Ovary (tissue), 10 donors: ENCODE measurements at regions of chr22 and their contacts with region 1.

Region 1: DNA sequence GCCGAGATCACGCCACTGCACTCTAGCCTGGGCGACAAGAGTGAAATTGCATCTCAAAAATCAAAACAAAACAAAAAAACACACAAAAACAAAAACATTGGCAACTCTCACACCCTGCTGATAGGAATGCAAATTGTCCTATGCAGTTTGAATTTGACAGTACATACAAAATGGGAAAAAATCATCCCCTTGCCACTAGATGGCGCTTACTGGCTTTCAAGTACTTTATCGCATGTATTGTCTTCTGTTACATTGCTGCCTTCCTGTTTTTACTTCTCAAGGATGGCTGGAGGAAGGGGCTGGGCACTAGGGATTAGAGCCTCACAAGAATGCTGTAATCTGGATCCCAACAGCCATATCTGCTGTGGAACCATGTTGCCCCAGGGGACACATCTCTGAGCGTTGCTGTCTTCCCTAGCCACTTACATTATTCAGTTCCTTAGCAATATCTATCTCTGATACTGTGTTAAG is 59.4 kb upstream of the A4GALT start:
- DNase-seq: peak in 1 of 5 donors; percentile 65
- H3K4me3 ChIP-seq: no peak overlapping the region
- H3K27ac ChIP-seq: no peak overlapping the region
- H3K4me1 ChIP-seq: no peaks in the 10 kb centered on the region
- H3K27me3 ChIP-seq: no peaks in the 10 kb centered on the region
- CTCF ChIP-seq: peak; percentile 74 to 90 (median 78)
- EP300 ChIP-seq: no peak
- POLR2A ChIP-seq: no peak

Region 2: GRCh38 chr22:42236268-42236667 is 543.8 kb before region 1 on chr22:
- intact Hi-C with region 1: no loop called
- DNase-seq: no peak
- H3K4me3 ChIP-seq: no peak overlapping the region
- H3K27ac ChIP-seq: no peak overlapping the region
- H3K4me1 ChIP-seq: peaks cover 2% of the 10 kb centered on the region
- H3K27me3 ChIP-seq: no peaks in the 10 kb centered on the region
- CTCF ChIP-seq: no peak
- EP300 ChIP-seq: no peak
- POLR2A ChIP-seq: no peak

Region 3: DNA sequence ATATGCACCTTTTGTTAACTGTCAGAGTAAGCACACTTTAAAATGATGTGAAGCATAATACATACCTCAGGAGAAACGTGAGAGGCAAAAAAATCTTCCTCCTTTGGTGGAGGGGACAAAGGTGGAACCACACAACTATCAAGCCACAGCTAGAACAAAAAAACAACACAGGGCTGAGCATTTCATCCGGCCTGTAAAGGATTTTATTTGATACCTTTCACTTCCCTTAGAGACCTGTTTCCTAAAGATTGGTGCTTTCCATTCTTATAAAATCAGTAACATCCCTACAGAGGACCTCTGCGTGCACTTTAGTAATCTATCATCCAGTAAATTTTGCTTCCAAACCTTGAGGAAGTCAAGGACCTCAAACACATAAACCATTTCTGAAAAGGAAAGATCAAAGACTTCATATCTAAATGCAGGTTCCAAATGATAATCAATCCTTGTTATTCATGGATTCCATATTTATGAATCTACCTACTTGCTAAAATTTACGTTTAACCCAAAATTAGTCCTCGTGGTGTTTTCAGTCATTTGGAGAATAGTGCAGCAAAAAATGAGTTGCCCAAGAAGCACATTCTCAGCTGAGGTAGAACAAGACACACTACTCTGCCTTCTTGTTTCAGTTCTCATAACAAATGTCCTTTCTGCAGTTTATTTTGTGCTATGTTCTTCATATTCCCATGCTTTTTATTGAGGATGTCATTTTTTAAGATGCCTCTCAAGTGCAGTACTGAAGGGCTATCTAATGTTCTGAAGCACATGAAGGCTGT is 54.3 kb after region 1 on chr22:
- intact Hi-C with region 1: no loop called
- DNase-seq: no peak
- H3K4me3 ChIP-seq: no peak overlapping the region
- H3K27ac ChIP-seq: no peak overlapping the region
- H3K4me1 ChIP-seq: no peaks in the 10 kb centered on the region
- H3K27me3 ChIP-seq: no peaks in the 10 kb centered on the region
- CTCF ChIP-seq: no peak
- EP300 ChIP-seq: no peak
- POLR2A ChIP-seq: no peak

Region 4: DNA sequence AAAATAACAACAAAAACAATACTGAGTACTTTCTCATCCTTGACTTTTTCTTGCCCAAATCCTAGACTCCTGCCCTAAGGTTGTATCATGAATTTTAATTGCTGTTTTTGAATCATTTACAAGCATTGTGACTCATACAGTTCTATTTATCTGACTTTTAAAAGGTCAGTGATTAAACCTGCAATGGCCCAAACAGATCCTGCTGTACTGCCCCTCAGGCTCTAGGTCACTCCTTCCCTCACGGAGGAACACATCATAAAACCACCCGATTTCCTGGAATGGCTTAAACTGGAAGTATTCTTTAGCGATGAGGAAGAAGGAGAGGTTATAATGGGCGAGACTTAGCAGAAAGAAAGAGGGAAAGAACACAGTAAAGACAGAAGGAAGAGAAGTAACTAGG is 64.7 kb after region 1 on chr22:
- intact Hi-C with region 1: no loop called
- DNase-seq: no peak
- H3K4me3 ChIP-seq: no peak overlapping the region
- H3K27ac ChIP-seq: no peak overlapping the region
- H3K4me1 ChIP-seq: no peaks in the 10 kb centered on the region
- H3K27me3 ChIP-seq: no peaks in the 10 kb centered on the region
- CTCF ChIP-seq: no peak
- EP300 ChIP-seq: no peak
- POLR2A ChIP-seq: no peak

Region 5: DNA sequence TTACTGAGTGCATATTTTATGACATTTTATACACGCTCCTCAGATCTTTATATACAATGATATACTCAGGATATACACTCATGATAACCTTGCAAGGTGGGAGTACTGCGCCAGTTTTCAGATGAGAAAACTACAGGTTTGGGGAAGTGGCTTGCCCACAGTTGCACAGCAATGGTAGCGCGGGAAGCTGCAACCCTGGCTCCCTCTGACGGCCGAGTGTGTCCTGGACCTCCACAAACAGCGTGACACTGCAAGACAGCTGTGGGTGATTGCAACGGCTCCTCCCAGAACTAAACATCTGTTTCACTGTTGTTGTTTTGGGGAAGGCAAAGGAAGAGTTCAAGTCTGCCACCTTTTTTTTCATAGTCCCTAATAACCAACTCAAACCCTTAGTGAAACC is 187.8 kb after region 1 on chr22:
- intact Hi-C with region 1: no loop called
- DNase-seq: no peak
- H3K4me3 ChIP-seq: no peak overlapping the region
- H3K27ac ChIP-seq: no peak overlapping the region
- H3K4me1 ChIP-seq: peaks cover 5% of the 10 kb centered on the region
- H3K27me3 ChIP-seq: no peaks in the 10 kb centered on the region
- CTCF ChIP-seq: no peak
- EP300 ChIP-seq: no peak
- POLR2A ChIP-seq: no peak

Region 6: GRCh38 chr22:43090130-43090789 is 310.2 kb after region 1 on chr22:
- intact Hi-C with region 1: loop called in 1 of 4 experiments (anchors 5 kb)
- DNase-seq: peak in 4 of 5 donors; percentile 38 to 62 (median 54)
- H3K4me3 ChIP-seq: no peak overlapping the region
- H3K27ac ChIP-seq: no peak overlapping the region
- H3K4me1 ChIP-seq: peaks cover 4% of the 10 kb centered on the region
- H3K27me3 ChIP-seq: no peaks in the 10 kb centered on the region
- CTCF ChIP-seq: no peak
- EP300 ChIP-seq: no peak
- POLR2A ChIP-seq: no peak